ENCODE measurements at regions of chr9 and their contacts with region 1.

Region 1: DNA sequence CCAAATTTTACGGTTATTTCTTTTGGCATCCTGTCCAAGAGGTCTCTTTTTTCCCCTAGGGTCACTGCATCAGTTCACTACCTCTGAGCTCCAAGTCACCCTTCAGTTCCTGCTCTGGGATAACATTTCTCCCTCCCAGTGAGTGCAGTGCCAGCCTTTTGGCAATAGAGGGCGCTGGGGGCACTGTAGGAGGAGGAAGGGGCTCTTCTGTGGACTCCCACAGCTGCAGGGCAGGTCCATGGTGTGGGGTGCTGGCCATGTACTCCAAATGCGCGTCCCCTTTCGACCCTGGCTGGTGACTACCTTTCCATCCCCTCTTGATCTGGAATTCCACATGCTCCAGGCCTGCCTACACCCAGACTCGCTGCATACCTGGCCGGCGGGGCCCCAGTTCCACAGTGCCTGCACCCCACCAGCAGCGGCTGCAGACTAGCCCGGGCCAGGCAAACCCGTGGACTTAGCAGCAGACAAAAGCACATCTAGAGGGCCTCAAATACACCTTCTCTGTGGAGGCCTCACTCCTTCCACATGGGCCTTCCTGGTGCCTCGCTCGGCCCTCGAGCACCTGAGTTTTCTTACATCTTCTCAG is 20.4 kb upstream of the NINJ1 start:
- DNase-seq: peak; percentile 80
- H3K4me3 ChIP-seq: no peak overlapping the region
- H3K27ac ChIP-seq: no peak overlapping the region
- H3K4me1 ChIP-seq: peaks cover 0 to 11% of the 10 kb centered on the region in 2 experiments; a peak in 1 of 4 replicates
- H3K27me3 ChIP-seq: no peaks in the 10 kb centered on the region
- CTCF ChIP-seq: peak; percentile 66
- EP300 ChIP-seq: no peak
- RAD21 ChIP-seq: peak; percentile 61

Region 2: DNA sequence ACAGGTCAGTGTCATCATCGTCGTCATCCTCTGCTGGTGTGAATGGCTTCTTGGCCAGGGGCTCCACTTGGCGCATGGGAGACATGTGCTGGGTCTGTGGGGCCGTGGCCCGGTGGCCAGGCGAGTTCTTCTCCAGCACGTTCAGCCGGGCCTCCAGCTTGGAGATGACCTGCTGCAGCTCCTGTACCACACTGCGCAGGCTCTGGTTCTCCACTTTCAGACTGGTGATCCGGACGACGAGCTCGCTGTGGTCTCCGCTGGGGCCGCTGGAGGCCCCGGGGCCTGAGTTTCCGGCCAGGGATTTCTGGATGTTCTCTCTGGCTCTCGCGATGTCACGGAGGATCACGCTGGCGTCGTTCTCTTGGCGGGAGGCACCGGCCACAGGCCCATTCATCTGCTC is 317.2 kb before region 1 on chr9:
- CTCF ChIA-PET with region 1: no interaction called
- POLR2A ChIA-PET with region 1: no interaction called
- DNase-seq: no peak
- H3K4me3 ChIP-seq: no peak overlapping the region
- H3K27ac ChIP-seq: no peak overlapping the region
- H3K4me1 ChIP-seq: no peaks in the 10 kb centered on the region
- H3K27me3 ChIP-seq: no peaks in the 10 kb centered on the region
- CTCF ChIP-seq: no peak
- EP300 ChIP-seq: no peak
- RAD21 ChIP-seq: no peak

Region 3: DNA sequence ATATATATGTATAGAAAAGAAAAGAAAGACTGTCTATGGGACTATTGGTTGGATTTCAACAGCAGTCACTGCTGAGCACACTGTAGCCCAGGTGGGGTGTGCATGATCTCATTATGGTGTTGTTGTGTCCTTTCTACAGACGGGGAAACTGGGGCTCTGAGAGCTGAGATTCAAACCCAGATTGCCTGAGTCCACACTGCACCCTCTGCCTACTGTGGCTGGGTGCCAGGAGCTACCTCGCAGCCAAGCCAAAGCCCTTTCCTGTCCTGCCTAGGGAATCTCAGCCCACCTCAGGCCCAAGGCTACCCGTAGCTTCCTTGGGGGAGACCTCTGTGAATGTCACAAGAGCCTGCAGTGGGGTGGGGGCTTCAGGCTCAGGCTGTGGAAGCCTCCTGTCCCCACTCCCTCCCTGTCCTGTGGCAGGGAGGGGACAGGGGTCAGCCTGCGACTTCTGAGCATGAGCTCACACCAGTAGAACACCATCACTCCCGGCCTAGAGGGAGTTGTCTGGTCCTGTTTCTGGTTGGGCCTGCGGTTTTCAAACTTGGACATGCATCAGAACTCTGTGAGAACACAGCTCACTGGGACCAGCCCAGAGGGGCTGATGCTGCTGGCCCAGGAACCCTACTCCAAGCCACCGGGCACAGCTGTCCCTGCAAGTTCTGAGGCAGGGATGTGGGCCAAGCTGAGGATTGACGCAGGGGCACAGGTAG is 12.5 kb before region 1 on chr9:
- CTCF ChIA-PET with region 1: interaction called, 15 read pairs
- POLR2A ChIA-PET with region 1: no interaction called
- DNase-seq: no peak
- H3K4me3 ChIP-seq: no peak overlapping the region
- H3K27ac ChIP-seq: no peak overlapping the region
- H3K4me1 ChIP-seq: peaks cover 0 to 15% of the 10 kb centered on the region in 2 experiments; a peak in 1 of 4 replicates
- H3K27me3 ChIP-seq: no peaks in the 10 kb centered on the region
- CTCF ChIP-seq: no peak
- EP300 ChIP-seq: no peak
- RAD21 ChIP-seq: no peak